Left colon (tissue), 2 donors: ENCODE measurements at regions of chr4 and their contacts with region 1.

Region 1: DNA sequence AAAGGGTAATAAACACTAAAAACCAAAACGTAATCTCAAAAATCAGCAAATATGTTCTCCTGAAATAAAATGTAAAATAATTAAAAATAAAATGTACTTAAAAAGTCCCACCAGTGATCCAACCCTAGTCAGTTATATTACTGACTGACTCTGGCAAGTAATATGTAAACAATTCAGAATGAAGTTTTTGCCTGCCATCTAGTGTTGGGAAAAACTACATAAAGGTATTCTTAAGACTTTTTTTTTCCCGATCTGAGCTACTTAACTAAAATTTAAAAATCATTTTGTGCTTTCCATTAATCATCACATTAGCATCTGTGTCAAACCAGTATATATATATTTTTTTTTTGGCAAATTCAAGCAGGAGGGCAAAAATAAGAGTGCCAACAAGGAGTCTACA is 24.0 kb downstream of the RCHY1 start:
- DNase-seq: no peak
- ATAC-seq: no peak

Region 2: DNA sequence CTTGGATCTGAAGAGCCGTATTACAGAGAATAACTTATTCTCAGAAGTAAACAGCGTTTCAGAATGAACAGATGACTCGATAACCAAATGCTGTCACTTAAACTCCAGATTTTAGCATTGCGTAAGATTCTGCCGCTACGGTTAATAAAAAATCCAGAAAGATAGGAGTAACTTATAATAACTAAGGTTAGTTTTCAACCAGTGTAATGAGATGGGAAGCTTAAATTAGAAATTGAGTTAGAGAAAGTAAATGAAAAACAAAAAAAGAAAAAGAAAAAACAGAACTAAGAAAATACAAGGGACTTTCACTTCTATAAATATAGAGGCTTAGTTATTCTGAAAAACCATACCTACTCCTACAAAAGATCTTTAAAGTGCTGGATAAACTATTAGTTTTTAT is 570.4 kb before region 1 on chr4:
- intact Hi-C with region 1: loop called in 1 of 2 experiments (anchors 10 kb)
- DNase-seq: no peak
- ATAC-seq: no peak

Region 3: DNA sequence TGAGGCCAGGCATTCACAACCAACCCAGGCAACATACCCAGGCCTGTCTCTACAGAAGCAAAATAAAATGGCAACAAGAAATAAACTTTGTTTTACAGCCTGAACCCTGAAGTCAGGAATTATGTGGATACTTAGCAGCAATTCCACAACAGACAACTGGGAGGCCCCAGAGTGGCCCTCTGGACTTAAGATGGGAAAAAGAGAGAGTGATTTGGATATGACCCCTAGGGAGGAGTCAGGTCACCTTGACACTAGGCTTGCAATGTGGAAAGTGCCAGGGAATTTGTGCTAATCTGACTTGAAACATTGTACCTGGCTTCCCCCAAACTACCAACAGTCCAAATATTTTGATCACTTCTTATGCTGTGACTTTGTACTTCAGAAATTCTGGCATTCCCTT is 364.1 kb before region 1 on chr4:
- intact Hi-C with region 1: no loop called
- DNase-seq: no peak
- ATAC-seq: peak; percentile 54